SK-N-SH (cell line): ENCODE measurements at regions of chr15 and their contacts with region 1.

Region 1: GRCh38 chr15:78422571-78423340 is 15.3 kb upstream of the IREB2 start:
- DNase-seq: peak; percentile 71
- H3K4me3 ChIP-seq: no peak overlapping the region
- H3K27ac ChIP-seq: no peak overlapping the region
- H3K4me1 ChIP-seq: peaks cover 0 to 9% of the 10 kb centered on the region in 2 experiments; a peak in 1 of 4 replicates
- H3K27me3 ChIP-seq: no peaks in the 10 kb centered on the region
- CTCF ChIP-seq: peak; percentile 97
- EP300 ChIP-seq: no peak
- RAD21 ChIP-seq: peak; percentile 84

Region 2: DNA sequence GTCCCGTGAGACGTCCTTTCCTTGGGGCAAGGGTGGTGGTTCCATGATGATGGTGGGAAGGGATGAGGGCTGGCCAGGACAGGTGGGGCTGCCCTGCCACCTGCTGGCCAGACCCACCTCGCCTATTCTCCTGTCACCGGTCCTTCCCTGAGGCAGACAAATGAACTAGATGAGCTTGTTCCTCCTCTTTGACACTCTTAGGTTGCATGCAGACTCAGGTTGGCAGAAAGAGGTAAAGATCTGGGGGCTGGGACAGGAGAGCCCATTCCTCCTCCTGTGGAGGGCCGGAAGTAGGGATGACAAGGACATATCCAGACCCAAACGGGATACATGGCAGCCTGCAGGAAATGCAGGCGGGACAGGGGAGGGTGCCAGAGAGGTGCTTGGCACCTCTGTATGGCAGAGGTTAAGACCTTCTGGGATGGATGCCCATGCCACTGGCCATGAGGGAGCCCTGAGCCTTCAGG is 227.0 kb before region 1 on chr15:
- CTCF ChIA-PET with region 1: no interaction called
- POLR2A ChIA-PET with region 1: no interaction called
- DNase-seq: peak; percentile 80
- H3K4me3 ChIP-seq: no peak overlapping the region
- H3K27ac ChIP-seq: no peak overlapping the region
- H3K4me1 ChIP-seq: no peaks in the 10 kb centered on the region
- H3K27me3 ChIP-seq: no peaks in the 10 kb centered on the region
- CTCF ChIP-seq: peak; percentile 62
- EP300 ChIP-seq: no peak
- RAD21 ChIP-seq: peak; percentile 72

Region 3: DNA sequence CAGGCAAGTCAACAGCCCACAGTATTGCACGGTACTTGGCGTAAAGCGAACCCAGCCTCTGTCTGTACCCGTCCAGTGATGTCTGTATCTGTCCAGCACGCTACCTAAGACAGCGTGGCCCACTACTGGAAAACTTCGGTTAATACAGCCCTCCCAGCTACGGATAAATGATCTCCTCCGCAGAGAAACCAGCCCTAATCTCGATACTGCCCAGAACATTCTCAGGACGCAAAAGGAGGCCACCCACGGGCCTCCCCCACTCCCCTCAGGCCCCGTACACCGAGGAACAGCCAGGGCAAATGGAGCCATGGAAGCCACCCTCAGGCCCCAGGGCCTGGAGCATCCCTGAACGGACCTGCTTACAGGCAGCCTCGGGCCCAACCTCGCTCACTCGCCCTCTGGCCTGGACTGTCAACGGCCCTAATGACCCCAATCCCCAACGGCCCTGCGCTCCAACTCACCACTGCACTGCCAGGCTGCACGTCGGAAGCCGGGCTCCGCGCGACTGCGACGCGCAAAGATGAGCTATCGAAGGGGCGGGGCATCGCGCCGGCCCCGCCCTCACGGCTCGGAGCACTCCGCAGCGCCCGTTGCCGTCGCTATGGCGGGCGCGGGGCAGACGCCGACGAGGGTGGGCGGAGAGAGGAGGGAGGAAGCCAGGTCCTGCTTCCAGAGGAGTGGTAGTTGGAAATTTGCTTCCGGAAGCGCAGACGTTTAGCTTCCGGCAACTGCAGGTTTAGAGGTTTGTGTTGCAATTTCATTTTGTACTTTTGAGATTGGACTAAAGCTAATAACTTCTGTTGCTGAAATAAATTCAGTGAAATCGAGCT is 123.4 kb before region 1 on chr15 and contains the start of gene SKIC8:
- CTCF ChIA-PET with region 1: interaction called, 772 read pairs
- POLR2A ChIA-PET with region 1: interaction called, 4 read pairs
- DNase-seq: peak; percentile 98
- H3K4me3 ChIP-seq: peak within 1 kb of the TSS; percentile 74 to 94
- H3K27ac ChIP-seq: peak within 1 kb of the TSS; percentile 70 to 78
- H3K4me1 ChIP-seq: peaks cover 11 to 18% of the 10 kb centered on the region in 2 experiments
- H3K27me3 ChIP-seq: no peaks in the 10 kb centered on the region
- CTCF ChIP-seq: peak; percentile 25
- EP300 ChIP-seq: 0 out of 4 replicates have a peak, but pooled peaks have one; percentile 29
- RAD21 ChIP-seq: no peak
- polyA plus RNA-seq, gene SKIC8: 78.8 and 124 TPM in 2 replicates

Region 4: GRCh38 chr15:78387246-78388077 is 35.3 kb before region 1 on chr15:
- CTCF ChIA-PET with region 1: interaction called, 16 read pairs
- POLR2A ChIA-PET with region 1: no interaction called
- DNase-seq: no peak
- H3K4me3 ChIP-seq: no peak overlapping the region
- H3K27ac ChIP-seq: no peak overlapping the region
- H3K4me1 ChIP-seq: peaks cover 0 to 30% of the 10 kb centered on the region in 2 experiments; a peak in 2 of 4 replicates
- H3K27me3 ChIP-seq: peaks cover 10% of the 10 kb centered on the region
- CTCF ChIP-seq: no peak
- EP300 ChIP-seq: no peak
- RAD21 ChIP-seq: no peak

Region 5: DNA sequence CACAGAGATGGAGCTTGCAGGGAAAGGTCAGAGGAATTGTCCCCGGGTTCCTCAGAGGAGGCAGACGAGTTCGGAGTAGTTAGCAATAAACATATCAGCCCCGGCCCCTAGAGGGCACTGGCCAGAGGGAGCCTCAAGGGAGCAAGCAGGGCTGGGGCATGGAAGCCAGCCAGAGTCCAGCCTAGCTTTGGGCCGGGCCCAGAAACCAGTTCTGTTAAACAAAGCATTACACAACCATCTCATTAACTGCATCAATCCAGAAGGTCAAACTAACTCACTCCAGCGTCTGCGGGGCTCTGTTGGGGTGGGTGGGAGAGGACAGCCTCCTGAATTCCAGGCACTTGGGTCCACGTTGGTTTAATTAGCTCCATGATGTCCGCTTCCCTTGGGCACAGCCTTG is 25.8 kb before region 1 on chr15:
- CTCF ChIA-PET with region 1: interaction called, 12 read pairs
- POLR2A ChIA-PET with region 1: no interaction called
- DNase-seq: no peak
- H3K4me3 ChIP-seq: no peak overlapping the region
- H3K27ac ChIP-seq: no peak overlapping the region
- H3K4me1 ChIP-seq: peaks cover 0 to 8% of the 10 kb centered on the region in 2 experiments; a peak in 1 of 4 replicates
- H3K27me3 ChIP-seq: no peaks in the 10 kb centered on the region
- CTCF ChIP-seq: peak; percentile 26; the same call in 1 of the 2 replicates
- EP300 ChIP-seq: no peak
- RAD21 ChIP-seq: no peak

Region 6: GRCh38 chr15:78407608-78408354 is 15.0 kb before region 1 on chr15:
- CTCF ChIA-PET with region 1: interaction called, 16 read pairs
- POLR2A ChIA-PET with region 1: no interaction called
- DNase-seq: peak; percentile 56
- H3K4me3 ChIP-seq: no peak overlapping the region
- H3K27ac ChIP-seq: peak overlapping the region in 1 of 2 experiments; percentile 53; a peak in 1 of 4 replicates
- H3K4me1 ChIP-seq: peaks cover 0 to 24% of the 10 kb centered on the region in 2 experiments; a peak in 2 of 4 replicates
- H3K27me3 ChIP-seq: no peaks in the 10 kb centered on the region
- CTCF ChIP-seq: no peak
- EP300 ChIP-seq: no peak
- RAD21 ChIP-seq: no peak

Region 7: DNA sequence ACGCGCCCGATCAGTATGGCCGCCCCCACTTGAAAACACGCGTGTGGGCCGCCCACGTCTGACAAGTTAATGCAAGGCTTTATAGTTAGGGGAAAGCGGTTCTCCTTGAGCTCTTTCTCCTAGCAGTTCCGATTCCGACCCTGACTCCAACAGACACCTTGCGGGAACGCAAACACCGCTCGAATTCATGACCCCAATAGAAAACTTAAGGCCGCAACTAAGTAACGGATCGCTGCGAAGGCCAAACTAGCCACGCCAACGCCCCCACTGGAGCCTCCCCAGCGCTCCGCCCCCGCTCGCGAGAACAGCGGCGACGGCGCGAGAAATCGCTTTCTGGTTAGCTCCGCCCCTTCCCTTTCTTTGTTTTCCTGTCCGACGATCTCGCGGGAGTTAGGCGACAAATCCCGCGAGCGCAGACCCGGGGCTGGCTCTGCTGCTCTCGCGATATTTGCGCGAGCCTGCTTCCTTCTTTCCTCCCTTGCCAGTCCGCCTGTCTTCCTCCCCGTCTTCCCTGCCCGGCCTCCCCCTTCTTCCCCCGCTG is 15.1 kb after region 1 on chr15 and contains the start of gene IREB2:
- CTCF ChIA-PET with region 1: interaction called, 19 read pairs
- POLR2A ChIA-PET with region 1: no interaction called
- DNase-seq: peak; percentile 99
- H3K4me3 ChIP-seq: peak within 1 kb of the TSS; percentile 85 to 91
- H3K27ac ChIP-seq: peak within 1 kb of the TSS; percentile 91 to 92
- H3K4me1 ChIP-seq: peaks cover 12 to 15% of the 10 kb centered on the region in 2 experiments; a peak in 3 of 4 replicates
- H3K27me3 ChIP-seq: no peaks in the 10 kb centered on the region
- CTCF ChIP-seq: no peak
- EP300 ChIP-seq: peak in 1 of 2 experiments; percentile 18; a peak in 1 of 4 replicates
- RAD21 ChIP-seq: no peak
- polyA plus RNA-seq, gene IREB2: 9.5 and 13.7 TPM in 2 replicates

Region 8: GRCh38 chr15:78481917-78482316 is 59.2 kb after region 1 on chr15:
- CTCF ChIA-PET with region 1: interaction called, 15 read pairs
- POLR2A ChIA-PET with region 1: no interaction called
- DNase-seq: no peak
- H3K4me3 ChIP-seq: no peak overlapping the region
- H3K27ac ChIP-seq: no peak overlapping the region
- H3K4me1 ChIP-seq: no peaks in the 10 kb centered on the region
- H3K27me3 ChIP-seq: no peaks in the 10 kb centered on the region
- CTCF ChIP-seq: no peak
- EP300 ChIP-seq: no peak
- RAD21 ChIP-seq: no peak

Region 9: DNA sequence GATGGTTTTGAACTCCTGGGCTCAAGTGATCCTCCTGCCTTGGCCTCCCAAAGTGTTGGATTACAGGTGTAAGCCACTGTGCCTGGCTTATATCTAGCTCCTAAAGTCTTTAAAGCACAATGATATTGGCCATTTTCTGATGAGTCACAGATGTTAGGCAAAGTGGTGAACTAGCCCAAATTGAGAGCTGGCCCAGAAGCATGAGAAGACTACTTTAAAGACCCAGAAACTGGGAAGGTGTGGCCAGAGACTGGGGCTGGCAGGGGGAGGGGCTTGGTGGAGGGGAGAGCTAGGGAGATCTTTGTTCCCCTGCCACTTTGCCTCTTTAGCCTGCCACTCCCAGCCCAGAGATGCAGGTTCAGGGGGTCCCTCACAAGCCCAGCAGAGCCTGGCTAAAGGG is 176.4 kb after region 1 on chr15:
- CTCF ChIA-PET with region 1: no interaction called
- POLR2A ChIA-PET with region 1: no interaction called
- DNase-seq: no peak
- H3K4me3 ChIP-seq: no peak overlapping the region
- H3K27ac ChIP-seq: no peak overlapping the region
- H3K4me1 ChIP-seq: peaks cover 0 to 10% of the 10 kb centered on the region in 2 experiments; a peak in 1 of 4 replicates
- H3K27me3 ChIP-seq: no peaks in the 10 kb centered on the region
- CTCF ChIP-seq: no peak
- EP300 ChIP-seq: no peak
- RAD21 ChIP-seq: no peak

Region 10: GRCh38 chr15:78671626-78672211 is 249.0 kb after region 1 on chr15:
- CTCF ChIA-PET with region 1: no interaction called
- POLR2A ChIA-PET with region 1: no interaction called
- DNase-seq: peak; percentile 88
- H3K4me3 ChIP-seq: no peak overlapping the region
- H3K27ac ChIP-seq: peak overlapping the region in 1 of 2 experiments; percentile 99; a peak in 2 of 4 replicates
- H3K4me1 ChIP-seq: peaks cover 0 to 65% of the 10 kb centered on the region in 2 experiments; a peak in 2 of 4 replicates
- H3K27me3 ChIP-seq: no peaks in the 10 kb centered on the region
- CTCF ChIP-seq: no peak
- EP300 ChIP-seq: peak; percentile 54 to 100; a peak in 3 of 4 replicates
- RAD21 ChIP-seq: peak; percentile 35